MCF 10A (cell line): ENCODE measurements at regions of chr12 and their contacts with region 1.

Region 1: DNA sequence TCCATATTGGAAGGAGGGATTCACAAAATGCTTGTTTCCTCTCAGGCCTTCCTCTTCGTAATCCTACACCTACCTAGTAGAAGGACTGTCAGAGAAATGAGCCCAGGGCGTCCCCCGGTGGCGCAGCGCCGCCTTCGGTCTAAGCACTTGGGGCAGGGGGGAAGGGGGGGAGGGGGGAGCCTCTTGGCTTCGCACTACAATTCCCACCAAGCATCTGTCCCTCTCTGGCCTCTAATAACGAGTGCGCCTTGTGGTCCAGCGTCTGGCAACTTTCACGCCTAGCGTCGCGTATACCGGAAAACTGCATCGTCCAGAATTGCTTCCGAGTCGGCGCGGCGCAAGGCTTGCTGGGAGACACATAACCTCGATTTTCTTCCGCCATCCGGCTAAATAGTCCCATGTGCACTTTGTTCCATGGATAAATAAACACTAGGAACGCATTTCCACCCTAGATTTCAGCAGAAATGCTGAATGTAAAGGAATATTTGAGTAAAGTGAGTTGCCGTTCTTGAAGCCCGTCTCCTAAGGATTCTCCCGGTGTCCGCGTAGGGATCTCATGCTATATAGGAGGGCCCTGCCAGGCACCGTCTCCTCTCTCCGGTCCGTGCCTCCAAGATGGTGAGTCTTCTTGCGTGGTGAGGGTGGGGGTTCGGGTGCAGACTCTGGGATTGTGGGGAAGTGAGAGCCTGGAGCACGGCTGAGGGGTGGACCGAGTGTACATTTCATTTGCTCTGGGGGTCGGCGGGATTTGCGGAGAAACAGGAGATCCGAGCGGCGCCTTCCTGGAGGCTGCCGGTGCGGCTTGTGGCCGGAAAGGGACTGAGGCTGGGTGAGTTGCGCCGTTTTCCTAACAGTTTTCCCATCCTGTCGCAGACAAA is at the start of gene RPS26:
- DNase-seq: peak; percentile 99
- H3K4me3 Mint-ChIP-seq: peak within 1 kb of the TSS; percentile 81
- H3K27ac Mint-ChIP-seq: peak within 1 kb of the TSS; percentile 91
- H3K4me1 Mint-ChIP-seq: peaks cover 7% of the 10 kb centered on the region
- H3K27me3 Mint-ChIP-seq: no peaks in the 10 kb centered on the region
- CTCF ChIP-seq: peak; percentile 33
- total RNA-seq, gene RPS26: 45.1 and 67.3 TPM in 2 replicates

Region 2: GRCh38 chr12:55757701-55758100 is 284.1 kb before region 1 on chr12:
- CTCF ChIA-PET with region 1: no interaction called
- POLR2A ChIA-PET with region 1: no interaction called
- intact Hi-C with region 1: no loop called
- DNase-seq: no peak
- H3K4me3 Mint-ChIP-seq: no peak overlapping the region
- H3K27ac Mint-ChIP-seq: no peak overlapping the region
- H3K4me1 Mint-ChIP-seq: peaks cover 6% of the 10 kb centered on the region
- H3K27me3 Mint-ChIP-seq: no peaks in the 10 kb centered on the region
- CTCF ChIP-seq: no peak

Region 3: GRCh38 chr12:55973598-55974307 is 68.0 kb before region 1 on chr12 and contains the start of gene RAB5B:
- CTCF ChIA-PET with region 1: interaction called, 4 read pairs
- POLR2A ChIA-PET with region 1: interaction called, 13 read pairs
- intact Hi-C with region 1: no loop called
- DNase-seq: peak; percentile 100
- H3K4me3 Mint-ChIP-seq: no peak within 1 kb of the TSS
- H3K27ac Mint-ChIP-seq: no peak within 1 kb of the TSS
- H3K4me1 Mint-ChIP-seq: peaks cover 25% of the 10 kb centered on the region
- H3K27me3 Mint-ChIP-seq: no peaks in the 10 kb centered on the region
- CTCF ChIP-seq: no peak
- total RNA-seq, gene RAB5B: 67.4 and 96.1 TPM in 2 replicates

Region 4: DNA sequence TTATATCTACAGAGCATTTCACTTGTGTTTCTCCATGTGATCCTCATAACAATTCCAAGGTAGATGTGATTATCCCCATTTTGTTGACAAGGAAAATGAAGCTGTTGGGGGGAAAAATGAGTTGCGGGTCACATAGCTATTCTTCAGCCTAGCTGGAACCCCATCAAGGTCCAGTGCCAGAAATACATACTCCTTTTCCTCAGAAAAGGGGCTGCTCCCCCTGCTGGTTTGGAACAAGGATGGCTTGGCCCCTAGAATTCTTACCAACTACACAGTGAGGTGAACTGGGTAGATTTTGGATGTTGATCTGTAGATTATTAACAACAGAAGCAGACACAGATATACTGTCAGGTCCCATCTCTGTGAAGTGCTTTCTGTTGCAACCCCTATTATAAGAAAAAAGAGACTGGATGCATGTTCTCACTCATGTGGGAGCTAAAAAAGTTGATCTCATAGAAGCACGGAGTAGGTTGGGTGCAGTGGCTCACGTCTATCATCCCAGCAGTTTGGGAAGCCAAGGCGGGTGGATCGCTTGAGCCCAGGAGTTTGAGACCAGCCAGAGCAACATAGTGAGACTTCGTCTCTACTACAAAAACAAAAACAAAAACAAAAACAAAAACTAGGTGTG is 12.0 kb before region 1 on chr12:
- CTCF ChIA-PET with region 1: interaction called, 25 read pairs
- POLR2A ChIA-PET with region 1: interaction called, 4 read pairs
- intact Hi-C with region 1: no loop called
- DNase-seq: peak; percentile 69
- H3K4me3 Mint-ChIP-seq: no peak overlapping the region
- H3K27ac Mint-ChIP-seq: no peak overlapping the region
- H3K4me1 Mint-ChIP-seq: peaks cover 11% of the 10 kb centered on the region
- H3K27me3 Mint-ChIP-seq: no peaks in the 10 kb centered on the region
- CTCF ChIP-seq: peak; percentile 68

Region 5: DNA sequence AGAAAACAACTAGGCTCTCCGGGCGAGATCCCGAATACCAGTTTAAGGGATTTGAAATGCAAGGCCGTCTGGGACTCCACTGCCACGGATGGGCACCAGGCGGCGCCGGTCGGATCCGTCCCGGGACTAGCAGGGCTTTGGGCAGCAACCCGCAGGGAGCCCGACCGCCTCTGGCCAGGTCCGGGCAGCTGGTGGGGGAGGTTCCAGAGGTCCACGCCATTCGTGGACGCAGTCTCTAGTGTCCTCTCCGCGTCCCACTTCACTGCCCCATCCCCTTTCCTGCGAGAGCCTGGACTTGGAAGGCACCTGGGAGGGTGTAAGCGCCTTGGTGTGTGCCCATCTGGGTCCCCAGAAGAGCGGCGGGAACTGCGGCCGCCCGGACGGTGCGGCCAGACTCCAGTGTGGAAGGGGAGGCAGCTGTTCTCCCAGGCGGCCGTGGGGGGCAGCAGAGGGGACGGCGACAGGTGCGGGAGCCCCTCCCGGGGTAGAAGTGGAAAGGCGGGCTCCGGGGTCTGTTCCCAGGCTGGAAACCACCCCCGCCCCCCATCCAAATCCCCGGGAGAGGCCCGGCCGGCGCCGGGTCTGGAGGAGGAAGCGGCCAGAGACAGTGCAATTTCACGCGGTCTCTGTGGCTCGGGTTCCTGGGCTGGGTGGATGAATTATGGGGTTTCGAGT is 37.3 kb after region 1 on chr12:
- CTCF ChIA-PET with region 1: interaction called, 12 read pairs
- POLR2A ChIA-PET with region 1: interaction called, 5 read pairs
- intact Hi-C with region 1: loop called (anchors 2 kb)
- DNase-seq: peak; percentile 85
- H3K4me3 Mint-ChIP-seq: peak overlapping the region; percentile 87
- H3K27ac Mint-ChIP-seq: no peak overlapping the region
- H3K4me1 Mint-ChIP-seq: no peaks in the 10 kb centered on the region
- H3K27me3 Mint-ChIP-seq: no peaks in the 10 kb centered on the region
- CTCF ChIP-seq: peak; percentile 60